Heart right ventricle (tissue), 16 donors: ENCODE measurements at regions of chr11 and their contacts with region 1.

Region 1: GRCh38 chr11:55942785-55943392 is 6.7 kb upstream of the OR5I1 start:
- DNase-seq: no peak
- ATAC-seq: no peak
- H3K4me3 ChIP-seq: no peak overlapping the region
- H3K27ac ChIP-seq: no peak overlapping the region
- H3K4me1 ChIP-seq: no peaks in the 10 kb centered on the region
- H3K27me3 ChIP-seq: no peaks in the 10 kb centered on the region
- CTCF ChIP-seq: peak in 7 of 9 donors; percentile 15 to 61 (median 44)

Region 2: GRCh38 chr11:55902303-55902702 is 40.6 kb before region 1 on chr11:
- intact Hi-C with region 1: no loop called
- DNase-seq: no peak
- ATAC-seq: no peak
- H3K4me3 ChIP-seq: no peak overlapping the region
- H3K27ac ChIP-seq: no peak overlapping the region
- H3K4me1 ChIP-seq: no peaks in the 10 kb centered on the region
- H3K27me3 ChIP-seq: no peaks in the 10 kb centered on the region
- CTCF ChIP-seq: no peak

Region 3: GRCh38 chr11:56783448-56784041 is 840.7 kb after region 1 on chr11:
- intact Hi-C with region 1: loop called in 8 of 10 experiments (anchors 5 to 10 kb)
- DNase-seq: no peak
- ATAC-seq: no peak
- H3K4me3 ChIP-seq: no peak overlapping the region
- H3K27ac ChIP-seq: no peak overlapping the region
- H3K4me1 ChIP-seq: no peaks in the 10 kb centered on the region
- H3K27me3 ChIP-seq: peaks cover 0 to 5% (median 0%) of the 10 kb centered on the region in 7 donors
- CTCF ChIP-seq: peak in 8 of 9 donors; percentile 8 to 71 (median 62)